ENCODE measurements at regions of chr5 and their contacts with region 1.

Region 1: DNA sequence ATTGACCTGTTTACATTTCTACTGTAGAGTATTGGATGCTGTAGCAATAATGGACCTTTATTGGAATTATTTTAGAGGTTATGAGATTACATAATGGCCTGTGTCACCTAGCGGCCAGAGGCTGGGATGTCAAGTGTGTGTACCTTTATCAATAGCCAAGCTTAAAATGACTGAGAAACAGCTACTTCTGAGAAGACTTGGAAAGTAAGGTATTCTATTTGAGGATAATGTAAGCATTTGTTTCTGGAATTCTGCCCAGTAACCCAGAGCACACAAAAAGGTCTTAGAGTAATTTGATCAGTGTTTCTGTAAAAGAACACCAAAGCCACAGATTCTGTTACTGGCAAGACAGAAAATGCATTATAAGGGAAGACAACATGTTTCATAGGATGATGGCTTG is 116.8 kb downstream of the MACIR start:
- DNase-seq: no peak
- H3K4me3 ChIP-seq: no peak overlapping the region
- H3K27ac ChIP-seq: no peak overlapping the region
- H3K4me1 ChIP-seq: no peaks in the 10 kb centered on the region
- H3K27me3 ChIP-seq: no peaks in the 10 kb centered on the region
- CTCF ChIP-seq: no peak
- POLR2A ChIP-seq: no peak

Region 2: GRCh38 chr5:103808464-103809106 is 433.2 kb after region 1 on chr5:
- intact Hi-C with region 1: loop called (anchors 5 kb)
- DNase-seq: no peak
- H3K4me3 ChIP-seq: no peak overlapping the region
- H3K27ac ChIP-seq: no peak overlapping the region
- H3K4me1 ChIP-seq: no peaks in the 10 kb centered on the region
- H3K27me3 ChIP-seq: no peaks in the 10 kb centered on the region
- CTCF ChIP-seq: peak in 1 of 3 experiments; percentile 23
- POLR2A ChIP-seq: no peak

Measured in vagina (tissue), 2 donors.